ENCODE measurements at regions of chr11 and their contacts with region 1.

Region 1: GRCh38 chr11:58654079-58654907 is 31.8 kb downstream of the CNTF start:
- DNase-seq: peak; percentile 91
- H3K4me3 ChIP-seq: no peak overlapping the region
- H3K27ac ChIP-seq: no peak overlapping the region
- H3K4me1 ChIP-seq: no peaks in the 10 kb centered on the region
- H3K27me3 ChIP-seq: no peaks in the 10 kb centered on the region
- CTCF ChIP-seq: peak; percentile 98

Region 2: GRCh38 chr11:58788355-58789023 is 134.2 kb after region 1 on chr11:
- CTCF ChIA-PET with region 1: no interaction called
- POLR2A ChIA-PET with region 1: no interaction called
- intact Hi-C with region 1: loop called (anchors 1 kb)
- DNase-seq: peak; percentile 78
- H3K4me3 ChIP-seq: no peak overlapping the region
- H3K27ac ChIP-seq: no peak overlapping the region
- H3K4me1 ChIP-seq: no peaks in the 10 kb centered on the region
- H3K27me3 ChIP-seq: no peaks in the 10 kb centered on the region
- CTCF ChIP-seq: peak; percentile 98

Region 3: DNA sequence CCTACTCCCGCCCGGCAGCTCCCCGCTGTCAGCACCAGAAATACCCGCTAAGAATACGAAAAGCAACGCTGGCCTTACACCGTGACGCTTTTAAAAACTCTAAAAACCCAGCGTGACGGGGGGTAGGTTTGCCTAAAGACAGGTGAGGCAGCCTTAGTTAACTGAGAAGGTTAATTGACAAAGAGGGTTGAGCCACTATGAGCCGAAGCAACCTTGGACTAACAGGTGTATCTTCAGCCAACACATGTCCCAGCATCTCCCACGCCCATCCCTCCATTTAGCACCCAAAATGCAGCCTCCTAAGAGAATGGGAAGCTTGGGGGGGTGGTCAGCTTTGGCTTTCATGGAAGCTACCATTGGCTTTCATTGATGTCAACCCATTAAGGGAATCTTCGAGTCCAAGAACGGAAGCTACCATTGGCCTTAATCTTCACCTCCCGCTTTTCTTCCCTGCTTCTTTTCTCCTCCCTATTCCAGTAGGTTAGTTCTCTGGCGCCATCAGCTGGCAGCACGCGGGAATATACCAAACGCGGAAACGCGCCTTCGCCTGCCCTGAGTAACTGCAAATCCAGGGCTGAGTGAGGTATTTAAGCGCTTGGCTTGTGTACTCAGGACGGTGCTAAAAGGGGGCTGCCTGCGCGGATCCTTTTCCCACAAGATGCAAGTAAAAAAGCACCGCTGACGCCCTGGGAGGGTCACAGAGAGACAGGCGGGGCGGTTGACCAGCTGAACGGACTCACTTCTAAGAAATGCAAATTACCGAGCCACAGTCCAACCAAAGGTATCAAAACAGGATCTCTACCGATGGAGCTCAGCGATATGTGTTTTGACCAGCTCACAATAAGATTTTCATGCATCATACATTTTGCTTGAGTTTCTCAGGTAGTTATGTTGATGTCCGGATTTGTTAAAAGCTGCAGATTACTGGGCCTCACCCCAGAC is 246.5 kb after region 1 on chr11:
- CTCF ChIA-PET with region 1: interaction called, 4 read pairs
- POLR2A ChIA-PET with region 1: no interaction called
- intact Hi-C with region 1: loop called (anchors 5 kb)
- DNase-seq: peak; percentile 84
- H3K4me3 ChIP-seq: no peak overlapping the region
- H3K27ac ChIP-seq: no peak overlapping the region
- H3K4me1 ChIP-seq: no peaks in the 10 kb centered on the region
- H3K27me3 ChIP-seq: peaks cover 22% of the 10 kb centered on the region
- CTCF ChIP-seq: peak; percentile 79

Region 4: GRCh38 chr11:59028105-59028504 is 373.8 kb after region 1 on chr11:
- CTCF ChIA-PET with region 1: no interaction called
- POLR2A ChIA-PET with region 1: no interaction called
- intact Hi-C with region 1: no loop called
- DNase-seq: no peak
- H3K4me3 ChIP-seq: no peak overlapping the region
- H3K27ac ChIP-seq: no peak overlapping the region
- H3K4me1 ChIP-seq: no peaks in the 10 kb centered on the region
- H3K27me3 ChIP-seq: peaks cover 33% of the 10 kb centered on the region
- CTCF ChIP-seq: no peak

Region 5: GRCh38 chr11:59053387-59053786 is 399.1 kb after region 1 on chr11:
- CTCF ChIA-PET with region 1: no interaction called
- POLR2A ChIA-PET with region 1: no interaction called
- intact Hi-C with region 1: loop called (anchors 2 kb)
- DNase-seq: peak; percentile 77
- H3K4me3 ChIP-seq: no peak overlapping the region
- H3K27ac ChIP-seq: no peak overlapping the region
- H3K4me1 ChIP-seq: no peaks in the 10 kb centered on the region
- H3K27me3 ChIP-seq: peaks cover 23% of the 10 kb centered on the region
- CTCF ChIP-seq: peak; percentile 74

Measured in A673 (cell line).